K562 (cell line): ENCODE measurements at regions of chr1 and their contacts with region 1.

Region 1: DNA sequence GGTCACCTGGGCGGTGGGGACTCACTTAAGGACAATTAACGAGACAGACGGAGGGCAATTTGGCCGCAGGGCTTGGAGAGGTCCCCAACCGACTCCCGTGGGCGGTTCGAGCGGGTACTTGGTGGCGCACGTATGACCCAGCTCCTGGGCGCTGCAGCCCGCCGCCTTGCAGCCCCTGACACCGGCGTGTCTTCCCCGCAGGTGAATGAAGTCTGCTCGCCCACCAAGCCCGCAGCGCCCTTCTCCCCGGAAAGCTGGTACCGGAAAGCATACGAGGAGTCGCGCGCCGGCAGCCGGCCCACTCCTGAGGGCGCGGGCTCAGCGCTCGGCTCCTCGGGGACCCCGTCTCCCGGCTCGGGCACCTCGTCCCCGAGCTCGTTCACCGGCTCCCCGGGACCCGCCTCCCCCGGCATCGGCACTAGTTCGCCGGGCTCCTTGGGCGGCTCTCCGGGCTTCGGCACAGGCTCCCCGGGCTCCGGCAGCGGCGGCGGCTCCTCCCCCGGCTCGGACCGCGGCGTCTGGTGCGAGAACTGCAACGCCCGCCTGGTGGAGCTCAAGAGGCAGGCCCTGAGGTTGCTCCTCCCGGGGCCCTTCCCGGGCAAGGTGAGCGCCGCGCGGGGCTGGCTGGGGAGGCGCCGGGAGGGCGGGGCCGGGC is 1.4 kb downstream of the KIF26B start:
- DNase-seq: peak; percentile 89 to 96 (median 96)
- ATAC-seq: peak; percentile 98
- H3K4me3 ChIP-seq: peak overlapping the region; percentile 35
- H3K27ac ChIP-seq: no peak overlapping the region
- H3K4me1 ChIP-seq: peaks cover 12 to 42% of the 10 kb centered on the region in 2 experiments
- H3K27me3 ChIP-seq: peaks cover 30 to 54% of the 10 kb centered on the region in 2 experiments
- CTCF ChIP-seq: peak; percentile 58 to 96 (median 87)
- EP300 ChIP-seq: no peak
- POLR2A ChIP-seq: no peak
- RAD21 ChIP-seq: peak; percentile 80 to 84

Region 2: GRCh38 chr1:245019910-245020486 is 136.2 kb before region 1 on chr1:
- CTCF ChIA-PET with region 1: no interaction called
- POLR2A ChIA-PET with region 1: no interaction called
- in situ Hi-C with region 1: no loop called
- intact Hi-C with region 1: no loop called
- DNase-seq: no peak
- ATAC-seq: peak; percentile 71
- H3K4me3 ChIP-seq: no peak overlapping the region
- H3K27ac ChIP-seq: no peak overlapping the region
- H3K4me1 ChIP-seq: no peaks in the 10 kb centered on the region; a peak in 1 of 5 replicates
- H3K27me3 ChIP-seq: no peaks in the 10 kb centered on the region
- CTCF ChIP-seq: no peak
- EP300 ChIP-seq: no peak
- POLR2A ChIP-seq: no peak
- RAD21 ChIP-seq: no peak

Region 3: DNA sequence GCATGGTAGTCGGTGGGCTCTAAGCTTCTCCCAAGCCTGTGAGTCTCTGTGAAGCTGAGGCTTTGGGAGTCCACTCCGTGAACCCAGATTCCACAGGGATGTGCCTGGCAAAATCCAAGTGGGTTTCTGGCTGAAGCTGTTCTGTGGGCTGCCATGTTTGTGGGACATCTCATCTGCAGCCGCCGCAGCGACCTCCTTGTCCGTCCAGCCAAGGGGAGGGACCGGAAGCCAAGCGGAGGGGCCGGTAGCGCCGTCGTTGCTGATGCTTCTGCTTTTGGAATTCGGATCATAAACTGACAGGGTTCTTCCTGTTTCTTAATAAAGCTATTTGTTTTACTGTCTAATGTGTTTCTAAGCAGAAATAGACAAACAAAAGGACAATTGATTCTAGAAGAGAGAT is 11.9 kb after region 1 on chr1:
- CTCF ChIA-PET with region 1: interaction called, 4 read pairs
- POLR2A ChIA-PET with region 1: interaction called, 10 read pairs
- in situ Hi-C with region 1: no loop called
- intact Hi-C with region 1: no loop called
- DNase-seq: peak in 2 of 4 experiments; percentile 17 to 21
- ATAC-seq: peak; percentile 66; the same call in 2 of the 3 replicates
- H3K4me3 ChIP-seq: no peak overlapping the region
- H3K27ac ChIP-seq: no peak overlapping the region
- H3K4me1 ChIP-seq: no peaks in the 10 kb centered on the region
- H3K27me3 ChIP-seq: peaks cover 56 to 78% of the 10 kb centered on the region in 2 experiments
- CTCF ChIP-seq: no peak
- EP300 ChIP-seq: no peak
- POLR2A ChIP-seq: no peak
- RAD21 ChIP-seq: no peak

Region 4: DNA sequence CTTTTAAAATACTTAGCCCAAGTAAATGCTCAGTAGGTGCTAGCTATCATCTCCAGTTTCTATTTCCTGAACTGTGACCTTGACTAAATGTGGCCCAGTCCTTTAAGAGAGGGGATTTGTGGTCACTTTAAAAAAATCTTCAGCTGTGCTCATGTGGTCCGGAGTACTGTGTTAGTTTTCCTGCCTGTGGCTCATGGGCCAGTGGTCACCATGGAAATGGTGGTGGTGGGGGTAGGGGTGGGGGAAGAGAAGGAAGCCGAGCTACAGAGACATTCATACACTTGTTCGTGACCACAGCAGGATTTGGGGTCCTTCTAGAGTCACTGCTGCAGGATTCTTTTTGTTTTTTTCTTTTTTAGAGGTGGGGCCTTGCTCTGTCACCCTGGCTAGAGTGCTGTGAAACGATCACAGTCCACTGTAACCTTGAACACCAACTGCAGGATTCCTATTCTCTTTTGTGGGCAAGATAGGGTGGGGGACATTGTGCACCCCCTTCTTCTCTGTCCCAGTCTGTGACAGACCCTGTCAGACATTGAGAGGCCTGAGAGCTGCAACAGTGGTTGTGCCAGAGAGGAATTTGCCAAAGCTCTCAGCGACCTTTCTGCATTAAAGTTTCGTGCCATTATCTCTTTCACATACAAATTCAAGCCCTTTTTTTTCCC is 24.4 kb after region 1 on chr1:
- CTCF ChIA-PET with region 1: no interaction called
- POLR2A ChIA-PET with region 1: no interaction called
- in situ Hi-C with region 1: no loop called
- intact Hi-C with region 1: no loop called
- DNase-seq: no peak
- ATAC-seq: no peak
- H3K4me3 ChIP-seq: no peak overlapping the region
- H3K27ac ChIP-seq: no peak overlapping the region
- H3K4me1 ChIP-seq: peaks cover 0 to 3% of the 10 kb centered on the region in 2 experiments; a peak in 1 of 5 replicates
- H3K27me3 ChIP-seq: peaks cover 47 to 50% of the 10 kb centered on the region in 2 experiments
- CTCF ChIP-seq: no peak
- EP300 ChIP-seq: no peak
- POLR2A ChIP-seq: no peak
- RAD21 ChIP-seq: no peak

Region 5: DNA sequence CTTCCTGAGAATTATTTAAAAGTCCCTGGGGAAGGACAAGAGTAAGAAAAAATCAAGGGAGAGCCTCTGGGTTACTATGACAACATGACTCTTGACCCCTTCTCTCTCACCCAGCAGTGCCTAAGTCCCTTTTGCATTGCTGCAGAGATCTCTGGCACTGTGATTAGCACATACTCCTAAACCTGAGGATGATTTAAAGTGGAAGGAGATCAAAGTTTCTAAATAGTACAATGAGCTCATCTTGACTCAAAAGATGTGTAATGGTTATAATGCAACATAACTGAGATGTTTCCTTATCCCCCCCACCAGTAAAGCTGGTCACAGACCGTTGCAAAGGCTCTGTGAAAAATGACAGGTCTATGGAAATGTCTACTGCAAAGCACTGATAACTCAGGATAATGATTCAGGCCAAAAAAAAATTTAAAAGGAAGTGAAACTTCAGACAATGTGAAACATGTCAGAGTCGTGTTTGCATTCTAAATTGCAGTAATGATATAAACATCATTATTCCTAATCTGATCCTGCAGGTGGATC is 517.7 kb after region 1 on chr1:
- CTCF ChIA-PET with region 1: no interaction called
- POLR2A ChIA-PET with region 1: no interaction called
- in situ Hi-C with region 1: no loop called
- intact Hi-C with region 1: loop called (anchors 10 kb)
- DNase-seq: no peak
- ATAC-seq: no peak
- H3K4me3 ChIP-seq: no peak overlapping the region
- H3K27ac ChIP-seq: no peak overlapping the region
- H3K4me1 ChIP-seq: no peaks in the 10 kb centered on the region; a peak in 2 of 5 replicates
- H3K27me3 ChIP-seq: peaks cover 14 to 36% of the 10 kb centered on the region in 2 experiments; a peak in 4 of 5 replicates
- CTCF ChIP-seq: no peak
- EP300 ChIP-seq: no peak
- POLR2A ChIP-seq: no peak
- RAD21 ChIP-seq: no peak

Region 6: DNA sequence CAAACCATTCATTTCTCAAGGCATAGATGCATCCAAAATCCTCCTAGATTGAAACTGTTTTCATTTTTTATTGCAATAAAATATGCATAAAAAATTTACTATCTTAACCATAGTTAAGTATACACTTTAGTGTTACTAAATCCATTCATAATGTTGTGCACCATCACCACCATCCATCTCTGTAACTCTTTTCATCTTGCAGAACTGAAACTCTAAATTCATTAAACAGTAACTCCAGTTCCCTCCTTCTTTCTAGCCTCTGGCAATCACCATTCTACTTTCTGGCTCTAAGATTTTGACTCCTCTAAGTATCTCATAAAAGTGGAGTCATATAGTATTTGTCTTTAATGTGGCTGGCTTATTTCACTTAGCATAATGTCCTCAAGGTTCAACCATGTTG is 1114.0 kb after region 1 on chr1:
- CTCF ChIA-PET with region 1: no interaction called
- POLR2A ChIA-PET with region 1: no interaction called
- in situ Hi-C with region 1: loop called (anchors 10 kb)
- intact Hi-C with region 1: no loop called
- DNase-seq: no peak
- ATAC-seq: no peak
- H3K4me3 ChIP-seq: no peak overlapping the region
- H3K27ac ChIP-seq: no peak overlapping the region
- H3K4me1 ChIP-seq: peaks cover 0 to 5% of the 10 kb centered on the region in 2 experiments; a peak in 2 of 5 replicates
- H3K27me3 ChIP-seq: no peaks in the 10 kb centered on the region
- CTCF ChIP-seq: no peak
- EP300 ChIP-seq: no peak
- POLR2A ChIP-seq: no peak
- RAD21 ChIP-seq: no peak

Region 7: DNA sequence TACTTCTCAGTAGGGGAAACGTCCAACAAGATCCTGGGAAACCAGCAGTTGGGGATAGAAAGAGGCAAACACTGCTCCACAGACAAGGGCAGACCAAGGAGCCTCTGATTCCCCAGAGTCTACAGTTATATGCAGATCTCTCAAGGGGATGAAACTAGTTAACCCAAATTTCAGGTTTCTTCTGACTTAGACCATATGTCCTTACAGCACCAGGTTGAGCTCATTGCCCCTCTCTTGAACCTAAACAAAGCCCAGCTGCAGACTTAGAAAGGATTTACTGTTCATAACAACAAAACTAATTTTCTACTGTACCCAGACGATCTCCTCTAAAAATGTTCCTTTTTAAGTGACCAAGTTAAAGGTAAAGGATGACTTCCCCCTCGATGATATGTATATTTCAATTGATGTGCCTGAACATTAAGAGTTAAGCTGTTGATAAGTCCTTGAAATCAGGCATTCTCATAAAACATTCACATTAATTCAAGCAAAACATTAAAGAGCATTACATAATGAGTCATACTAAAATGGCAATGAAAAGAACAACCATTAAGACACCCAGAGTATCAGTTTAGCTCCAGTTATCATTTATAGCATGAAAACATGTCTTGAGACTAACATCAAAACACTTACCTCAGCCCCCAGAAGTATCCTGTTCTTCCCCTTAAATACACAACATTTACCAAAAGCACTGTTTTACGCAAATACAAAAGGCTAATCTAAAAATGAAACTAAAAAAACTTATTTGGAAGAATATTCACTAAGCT is 1326.8 kb after region 1 on chr1:
- CTCF ChIA-PET with region 1: no interaction called
- POLR2A ChIA-PET with region 1: no interaction called
- in situ Hi-C with region 1: loop called (anchors 10 kb)
- intact Hi-C with region 1: no loop called
- DNase-seq: no peak
- ATAC-seq: no peak
- H3K4me3 ChIP-seq: no peak overlapping the region
- H3K27ac ChIP-seq: no peak overlapping the region
- H3K4me1 ChIP-seq: no peaks in the 10 kb centered on the region
- H3K27me3 ChIP-seq: no peaks in the 10 kb centered on the region
- CTCF ChIP-seq: no peak
- EP300 ChIP-seq: no peak
- POLR2A ChIP-seq: no peak
- RAD21 ChIP-seq: no peak

Region 8: DNA sequence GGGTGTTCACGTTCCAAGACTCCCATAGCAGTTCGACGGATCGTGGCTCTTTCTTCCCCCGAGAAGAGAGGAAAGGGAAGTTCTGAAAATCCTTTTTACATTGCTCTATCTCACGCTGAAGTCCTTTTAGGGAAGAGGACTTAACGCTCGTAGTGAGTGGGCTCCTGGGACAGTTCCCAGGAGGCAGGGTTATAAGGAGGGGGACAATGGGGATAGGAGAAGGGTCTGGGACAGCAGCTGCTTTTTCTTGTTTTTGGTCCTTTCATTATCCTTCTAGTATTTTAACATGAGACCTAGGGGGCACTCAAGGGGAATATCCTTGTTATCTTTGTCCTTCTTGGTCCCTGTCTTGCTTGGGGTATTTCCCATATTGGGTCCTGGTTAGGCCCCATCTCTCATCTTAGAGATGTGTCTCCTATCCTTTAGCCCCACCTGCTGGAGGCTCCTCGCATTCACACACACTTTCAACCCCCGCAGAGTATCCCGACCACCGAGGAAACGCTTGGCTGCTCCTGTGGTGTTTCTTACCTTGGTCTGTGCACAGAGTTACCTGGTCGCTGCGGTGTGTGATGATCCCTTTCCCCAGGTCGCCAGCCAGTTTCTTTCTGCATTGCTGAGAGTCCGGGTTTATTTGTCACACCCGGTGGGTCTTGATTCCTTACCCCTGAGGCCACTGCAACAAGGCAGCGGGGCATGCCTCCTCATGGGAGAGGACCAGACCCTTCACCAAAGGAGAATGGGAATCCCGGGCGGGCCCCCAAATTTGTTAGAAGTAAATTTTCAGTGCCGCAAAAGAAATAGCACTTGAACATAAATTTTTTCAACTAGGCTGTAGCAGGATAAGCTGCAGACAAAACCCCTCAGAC is 1597.7 kb after region 1 on chr1:
- CTCF ChIA-PET with region 1: interaction called, 4 read pairs
- POLR2A ChIA-PET with region 1: no interaction called
- in situ Hi-C with region 1: no loop called
- intact Hi-C with region 1: loop called (anchors 10 kb)
- DNase-seq: peak; percentile 67 to 81 (median 70)
- ATAC-seq: peak; percentile 99
- H3K4me3 ChIP-seq: no peak overlapping the region
- H3K27ac ChIP-seq: no peak overlapping the region
- H3K4me1 ChIP-seq: 0 out of 5 replicates have a peak, but pooled peaks cover 0 to under 1% of the 10 kb centered on the region in 2 experiments
- H3K27me3 ChIP-seq: no peaks in the 10 kb centered on the region
- CTCF ChIP-seq: peak; percentile 82 to 94 (median 90)
- EP300 ChIP-seq: no peak
- POLR2A ChIP-seq: no peak
- RAD21 ChIP-seq: peak; percentile 75 to 87